OCI-LY7 (cell line): ENCODE measurements at regions of chr6 and their contacts with region 1.

Region 1: GRCh38 chr6:33391278-33391921 is at the start of gene KIFC1:
- DNase-seq: peak; percentile 100
- H3K4me3 ChIP-seq: peak within 1 kb of the TSS; percentile 94
- H3K27ac ChIP-seq: peak within 1 kb of the TSS; percentile 90
- H3K4me1 ChIP-seq: peaks cover 35% of the 10 kb centered on the region
- CTCF ChIP-seq: peak; percentile 87
- total RNA-seq, gene KIFC1: 133 and 138 TPM in 2 replicates

Region 2: GRCh38 chr6:33215271-33216116 is 175.9 kb before region 1 on chr6:
- CTCF ChIA-PET with region 1: no interaction called
- POLR2A ChIA-PET with region 1: no interaction called
- intact Hi-C with region 1: no loop called
- DNase-seq: no peak
- H3K4me3 ChIP-seq: no peak overlapping the region
- H3K27ac ChIP-seq: no peak overlapping the region
- H3K4me1 ChIP-seq: peaks cover 10% of the 10 kb centered on the region
- CTCF ChIP-seq: no peak

Region 3: GRCh38 chr6:33276864-33277662 is 114.3 kb before region 1 on chr6 and contains the start of gene B3GALT4:
- CTCF ChIA-PET with region 1: no interaction called
- POLR2A ChIA-PET with region 1: no interaction called
- intact Hi-C with region 1: loop called (anchors 5 kb)
- DNase-seq: peak; percentile 83
- H3K4me3 ChIP-seq: peak within 1 kb of the TSS; percentile 97
- H3K27ac ChIP-seq: peak within 1 kb of the TSS; percentile 93
- H3K4me1 ChIP-seq: peaks cover 58% of the 10 kb centered on the region
- CTCF ChIP-seq: peak; percentile 53
- total RNA-seq, gene B3GALT4: 13.1 and 14.2 TPM in 2 replicates

Region 4: GRCh38 chr6:33323623-33323948 is 67.8 kb before region 1 on chr6:
- CTCF ChIA-PET with region 1: no interaction called
- POLR2A ChIA-PET with region 1: interaction called, 3 read pairs
- intact Hi-C with region 1: loop called (anchors 1 kb)
- DNase-seq: no peak
- H3K4me3 ChIP-seq: peak overlapping the region; percentile 88
- H3K27ac ChIP-seq: peak overlapping the region; percentile 98
- H3K4me1 ChIP-seq: peaks cover 56% of the 10 kb centered on the region
- CTCF ChIP-seq: no peak

Region 5: GRCh38 chr6:33410050-33410710 is 18.8 kb after region 1 on chr6:
- CTCF ChIA-PET with region 1: interaction called, 10 read pairs
- POLR2A ChIA-PET with region 1: no interaction called
- intact Hi-C with region 1: loop called (anchors 1 kb)
- DNase-seq: peak; percentile 97
- H3K4me3 ChIP-seq: peak overlapping the region; percentile 81
- H3K27ac ChIP-seq: peak overlapping the region; percentile 85
- H3K4me1 ChIP-seq: peaks cover 40% of the 10 kb centered on the region
- CTCF ChIP-seq: no peak

Region 6: GRCh38 chr6:33425668-33426577 is 34.5 kb after region 1 on chr6:
- CTCF ChIA-PET with region 1: interaction called, 3 read pairs
- POLR2A ChIA-PET with region 1: interaction called, 6 read pairs
- intact Hi-C with region 1: loop called (anchors 1 kb)
- DNase-seq: peak; percentile 78
- H3K4me3 ChIP-seq: peak overlapping the region; percentile 67
- H3K27ac ChIP-seq: peak overlapping the region; percentile 58
- H3K4me1 ChIP-seq: peaks cover 51% of the 10 kb centered on the region
- CTCF ChIP-seq: peak; percentile 75

Region 7: GRCh38 chr6:33824461-33825154 is 433.2 kb after region 1 on chr6:
- CTCF ChIA-PET with region 1: no interaction called
- POLR2A ChIA-PET with region 1: no interaction called
- intact Hi-C with region 1: no loop called
- DNase-seq: no peak
- H3K4me3 ChIP-seq: no peak overlapping the region
- H3K27ac ChIP-seq: no peak overlapping the region
- H3K4me1 ChIP-seq: no peaks in the 10 kb centered on the region
- CTCF ChIP-seq: no peak